Heart left ventricle (tissue), 16 donors: ENCODE measurements at regions of chr11 and their contacts with region 1.

Region 1: DNA sequence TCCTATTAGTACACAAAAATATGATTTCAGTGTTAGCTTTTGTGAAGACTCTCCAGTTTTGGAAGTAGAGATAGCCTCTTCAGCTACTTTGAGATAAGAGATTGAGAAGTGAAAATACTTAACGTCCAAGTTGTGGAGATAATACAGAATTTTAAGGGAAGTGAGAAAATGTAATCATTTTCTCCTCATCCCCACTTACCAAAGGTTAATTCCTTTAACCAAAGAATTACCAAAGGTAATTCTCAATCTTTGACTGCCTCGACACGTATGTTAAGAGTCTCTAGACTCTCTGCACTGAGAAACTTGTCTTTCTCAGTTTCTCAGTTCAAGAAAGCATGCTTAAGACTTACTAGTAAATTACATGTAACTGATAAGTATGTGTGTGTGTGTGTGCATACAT is 15.3 kb downstream of the C11orf54 start:
- DNase-seq: no peak
- ATAC-seq: no peak
- H3K4me3 ChIP-seq: no peak overlapping the region
- H3K27ac ChIP-seq: no peak overlapping the region
- H3K4me1 ChIP-seq: no peaks in the 10 kb centered on the region
- H3K27me3 ChIP-seq: no peaks in the 10 kb centered on the region
- CTCF ChIP-seq: no peak
- POLR2A ChIP-seq: no peak

Region 2: GRCh38 chr11:93689240-93689639 is 67.5 kb before region 1 on chr11:
- intact Hi-C with region 1: no loop called
- DNase-seq: no peak
- ATAC-seq: no peak
- H3K4me3 ChIP-seq: no peak overlapping the region
- H3K27ac ChIP-seq: no peak overlapping the region
- H3K4me1 ChIP-seq: no peaks in the 10 kb centered on the region
- H3K27me3 ChIP-seq: no peaks in the 10 kb centered on the region
- CTCF ChIP-seq: no peak
- POLR2A ChIP-seq: no peak

Region 3: GRCh38 chr11:93718057-93718563 is 38.6 kb before region 1 on chr11:
- intact Hi-C with region 1: no loop called
- DNase-seq: no peak
- ATAC-seq: peak in 1 of 4 donors; percentile 46
- H3K4me3 ChIP-seq: no peak overlapping the region
- H3K27ac ChIP-seq: peak overlapping the region in 1 of 12 donors; percentile 56
- H3K4me1 ChIP-seq: peaks cover 0 to 21% (median 0%) of the 10 kb centered on the region in 12 donors
- H3K27me3 ChIP-seq: no peaks in the 10 kb centered on the region
- CTCF ChIP-seq: no peak
- POLR2A ChIP-seq: no peak

Region 4: DNA sequence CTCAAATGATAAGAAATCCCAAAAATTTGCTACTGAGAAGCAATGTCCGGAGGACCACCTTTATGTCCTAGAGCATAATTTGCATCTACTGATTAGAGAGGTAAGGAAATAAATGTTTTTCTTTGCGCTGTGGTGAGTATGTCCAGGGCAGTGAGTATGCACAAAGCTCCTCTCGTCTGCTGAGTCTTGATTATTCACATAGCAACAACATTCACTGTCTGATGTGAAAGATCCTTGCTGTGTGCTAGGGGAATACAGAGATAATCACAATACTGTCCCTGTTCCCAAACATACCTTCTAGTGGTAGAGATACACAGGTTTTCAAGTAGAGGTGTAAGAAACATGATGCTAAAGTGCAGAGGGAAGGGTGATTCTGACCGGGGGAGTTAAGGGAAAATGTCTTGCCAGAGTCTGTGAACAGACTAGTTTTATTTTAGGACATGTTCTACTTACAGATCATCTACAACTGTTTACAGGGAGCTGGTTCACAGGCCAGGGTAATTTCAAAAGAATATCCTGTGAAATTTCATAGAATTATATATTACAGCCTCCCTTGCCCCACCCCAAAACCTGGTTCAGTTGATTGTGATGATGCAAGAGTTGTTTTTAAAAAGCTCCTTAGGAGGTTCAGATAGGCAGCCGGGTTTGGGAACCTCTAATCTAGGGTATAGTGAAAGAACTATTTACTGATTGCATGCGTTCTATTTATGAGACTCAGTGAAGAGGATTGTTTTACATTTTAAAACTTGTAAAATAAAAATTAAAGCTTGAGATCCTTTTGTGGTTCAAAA is 39.9 kb after region 1 on chr11:
- intact Hi-C with region 1: loop called in 1 of 10 experiments (anchors 5 kb)
- DNase-seq: no peak
- ATAC-seq: peak in 2 of 4 donors; percentile 34 to 45
- H3K4me3 ChIP-seq: no peak overlapping the region
- H3K27ac ChIP-seq: peak overlapping the region in 1 of 12 donors; percentile 4
- H3K4me1 ChIP-seq: peaks cover 0 to 10% (median 0%) of the 10 kb centered on the region in 12 donors
- H3K27me3 ChIP-seq: no peaks in the 10 kb centered on the region
- CTCF ChIP-seq: no peak
- POLR2A ChIP-seq: no peak